ENCODE measurements at regions of chr18 and their contacts with region 1.

Region 1: DNA sequence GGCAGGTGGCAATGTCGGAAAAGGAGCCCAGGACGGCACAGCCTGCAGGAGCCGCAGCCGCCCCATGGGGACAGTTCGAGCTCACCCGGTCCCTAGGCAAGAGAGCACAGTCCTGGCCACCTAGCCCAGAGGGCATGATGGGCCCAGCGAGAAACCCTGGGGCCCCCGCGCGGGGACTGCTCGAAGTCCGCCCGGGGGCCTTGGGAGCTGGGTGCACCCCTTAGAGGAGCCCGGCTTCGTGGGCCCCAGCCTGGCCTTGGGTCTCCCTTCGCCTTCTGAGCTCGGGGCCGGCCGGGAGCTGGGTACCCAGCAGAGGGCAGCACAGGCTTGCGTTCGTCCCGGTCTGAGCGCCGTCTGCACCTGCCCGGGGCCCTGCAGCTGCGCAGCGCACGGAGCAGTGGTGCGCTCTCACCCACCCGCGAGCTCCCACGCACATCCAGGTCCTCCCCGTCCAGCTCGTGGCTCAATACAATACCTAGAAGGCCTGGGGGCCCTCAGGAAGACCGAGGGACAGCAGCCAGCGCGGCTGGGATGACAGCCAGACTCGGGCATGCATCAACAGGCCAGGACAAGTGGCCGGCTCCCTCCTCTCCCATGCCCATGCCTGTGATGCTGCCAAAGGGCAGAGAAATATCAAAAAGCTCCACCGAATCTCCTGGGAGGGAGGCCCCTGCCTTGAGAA is 96.2 kb upstream of the ZNF532 start:
- DNase-seq: peak; percentile 85
- H3K4me3 Mint-ChIP-seq: no peak overlapping the region
- H3K27ac Mint-ChIP-seq: no peak overlapping the region
- H3K4me1 Mint-ChIP-seq: peaks cover 3% of the 10 kb centered on the region
- H3K27me3 Mint-ChIP-seq: peaks cover 35% of the 10 kb centered on the region

Region 2: GRCh38 chr18:58493516-58494253 is 274.7 kb before region 1 on chr18:
- CTCF ChIA-PET with region 1: interaction called, 41 read pairs
- POLR2A ChIA-PET with region 1: interaction called, 3 read pairs
- intact Hi-C with region 1: loop called (anchors 1 kb)
- DNase-seq: peak; percentile 85
- H3K4me3 Mint-ChIP-seq: no peak overlapping the region
- H3K27ac Mint-ChIP-seq: peak overlapping the region; percentile 11
- H3K4me1 Mint-ChIP-seq: peaks cover 6% of the 10 kb centered on the region
- H3K27me3 Mint-ChIP-seq: peaks cover 30% of the 10 kb centered on the region

Region 3: GRCh38 chr18:58541789-58542425 is 226.5 kb before region 1 on chr18:
- CTCF ChIA-PET with region 1: interaction called, 35 read pairs
- POLR2A ChIA-PET with region 1: interaction called, 3 read pairs
- intact Hi-C with region 1: no loop called
- DNase-seq: peak; percentile 80
- H3K4me3 Mint-ChIP-seq: no peak overlapping the region
- H3K27ac Mint-ChIP-seq: peak overlapping the region; percentile 89
- H3K4me1 Mint-ChIP-seq: peaks cover 80% of the 10 kb centered on the region
- H3K27me3 Mint-ChIP-seq: peaks cover 3% of the 10 kb centered on the region

Region 4: GRCh38 chr18:58781627-58782194 is 13.3 kb after region 1 on chr18:
- CTCF ChIA-PET with region 1: interaction called, 36 read pairs
- POLR2A ChIA-PET with region 1: no interaction called
- intact Hi-C with region 1: no loop called
- DNase-seq: peak; percentile 80
- H3K4me3 Mint-ChIP-seq: no peak overlapping the region
- H3K27ac Mint-ChIP-seq: no peak overlapping the region
- H3K4me1 Mint-ChIP-seq: no peaks in the 10 kb centered on the region
- H3K27me3 Mint-ChIP-seq: peaks cover 14% of the 10 kb centered on the region

Region 5: GRCh38 chr18:58953627-58954026 is 185.2 kb after region 1 on chr18:
- CTCF ChIA-PET with region 1: no interaction called
- POLR2A ChIA-PET with region 1: no interaction called
- intact Hi-C with region 1: no loop called
- DNase-seq: no peak
- H3K4me3 Mint-ChIP-seq: no peak overlapping the region
- H3K27ac Mint-ChIP-seq: no peak overlapping the region
- H3K4me1 Mint-ChIP-seq: no peaks in the 10 kb centered on the region
- H3K27me3 Mint-ChIP-seq: peaks cover 1% of the 10 kb centered on the region

Region 6: DNA sequence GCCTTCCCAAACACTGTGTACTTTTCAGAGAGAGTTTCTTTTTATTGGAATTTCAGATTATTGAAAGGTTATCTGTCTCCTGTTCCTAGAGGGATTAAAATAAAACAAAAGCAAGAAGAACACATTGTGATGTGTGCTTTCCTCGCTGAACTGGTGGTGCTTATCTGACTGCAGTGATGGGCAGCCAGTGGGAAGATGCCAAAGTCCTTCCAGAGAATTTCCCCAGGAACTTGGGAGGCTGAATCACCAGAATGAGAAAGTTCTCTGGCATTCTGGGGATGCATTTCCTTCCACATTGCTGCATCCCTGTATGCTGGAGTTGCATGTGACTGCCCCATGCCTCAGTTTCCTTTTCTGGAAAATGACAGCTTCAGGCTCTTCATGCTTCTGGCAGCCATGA is 317.4 kb after region 1 on chr18:
- CTCF ChIA-PET with region 1: interaction called, 13 read pairs
- POLR2A ChIA-PET with region 1: no interaction called
- intact Hi-C with region 1: no loop called
- DNase-seq: no peak
- H3K4me3 Mint-ChIP-seq: no peak overlapping the region
- H3K27ac Mint-ChIP-seq: no peak overlapping the region
- H3K4me1 Mint-ChIP-seq: peaks cover 8% of the 10 kb centered on the region
- H3K27me3 Mint-ChIP-seq: peaks cover 16% of the 10 kb centered on the region